GM12878 (cell line): ENCODE measurements at regions of chr17 and their contacts with region 1.

Region 1: GRCh38 chr17:75749545-75750389 is 15.2 kb downstream of the GALK1 start:
- DNase-seq: no peak
- ATAC-seq: peak; percentile 82
- H3K4me3 ChIP-seq: no peak overlapping the region
- H3K27ac ChIP-seq: no peak overlapping the region
- H3K4me1 ChIP-seq: peaks cover 10% of the 10 kb centered on the region
- H3K27me3 ChIP-seq: no peaks in the 10 kb centered on the region
- CTCF ChIP-seq: peak; percentile 85 to 94 (median 88)
- EP300 ChIP-seq: no peak
- POLR2A ChIP-seq: no peak
- RAD21 ChIP-seq: peak; percentile 77

Region 2: DNA sequence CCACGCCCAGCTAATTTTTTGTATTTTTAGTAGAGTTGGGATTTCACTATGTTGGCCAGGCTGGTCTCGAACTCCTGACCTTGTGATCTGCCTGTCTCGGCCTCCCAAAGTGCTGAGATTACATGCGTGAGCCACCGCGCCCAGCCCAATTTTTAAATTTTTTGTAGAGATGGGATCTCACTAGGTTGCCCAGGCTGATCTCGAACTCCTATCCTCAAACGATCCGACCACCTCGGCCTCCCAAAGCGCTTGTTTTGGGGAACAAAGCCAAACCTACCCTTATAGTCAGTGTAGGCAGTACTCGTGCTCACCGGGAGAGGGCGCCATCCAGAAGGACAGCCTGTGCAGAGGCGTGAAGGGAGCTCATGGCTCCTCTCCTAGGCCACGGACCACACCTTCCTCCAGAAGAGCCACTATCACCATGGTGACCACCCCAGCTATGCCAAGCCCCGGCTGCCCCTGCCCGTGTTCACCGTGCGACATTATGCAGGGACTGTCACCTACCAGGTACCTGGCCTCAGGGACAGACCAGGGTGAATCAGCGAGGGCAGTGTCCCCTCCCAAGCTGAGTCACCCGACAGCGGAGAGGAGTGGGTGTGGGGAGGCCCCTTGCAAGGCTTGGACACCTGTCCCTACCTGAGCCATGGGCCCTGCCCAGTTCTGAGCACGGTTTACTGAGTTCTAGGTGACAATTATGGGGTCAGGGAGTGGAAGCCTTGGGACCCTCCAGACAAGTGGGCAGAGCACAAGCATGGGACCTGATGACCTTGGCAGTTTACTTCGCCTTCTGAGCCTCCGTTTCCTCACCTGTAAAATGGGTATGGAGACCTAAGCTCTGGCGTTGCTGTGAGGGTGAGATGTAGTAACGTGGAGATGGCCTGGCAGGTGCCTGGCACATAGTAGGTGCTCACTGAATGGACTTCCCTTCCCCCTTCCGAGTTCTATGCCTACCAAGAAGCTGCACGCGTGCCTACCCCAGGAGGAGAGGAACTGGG is 148.4 kb before region 1 on chr17:
- CTCF ChIA-PET with region 1: interaction called, 164 read pairs
- POLR2A ChIA-PET with region 1: no interaction called
- RAD21 ChIA-PET with region 1: interaction called, 51 read pairs
- SMC1A ChIA-PET with region 1: interaction called, 18 read pairs
- in situ Hi-C with region 1: no loop called
- intact Hi-C with region 1: loop called (anchors 2 kb)
- DNase-seq: no peak
- ATAC-seq: peak; percentile 94
- H3K4me3 ChIP-seq: no peak overlapping the region
- H3K27ac ChIP-seq: no peak overlapping the region
- H3K4me1 ChIP-seq: no peaks in the 10 kb centered on the region
- H3K27me3 ChIP-seq: no peaks in the 10 kb centered on the region
- CTCF ChIP-seq: peak; percentile 74 to 91 (median 79)
- EP300 ChIP-seq: no peak
- POLR2A ChIP-seq: no peak
- RAD21 ChIP-seq: peak; percentile 45

Region 3: GRCh38 chr17:75645889-75646637 is 103.7 kb before region 1 on chr17:
- CTCF ChIA-PET with region 1: interaction called, 89 read pairs
- POLR2A ChIA-PET with region 1: interaction called, 5 read pairs
- RAD21 ChIA-PET with region 1: interaction called, 6 read pairs
- SMC1A ChIA-PET with region 1: interaction called, 20 read pairs
- in situ Hi-C with region 1: no loop called
- intact Hi-C with region 1: no loop called
- DNase-seq: peak; percentile 42
- ATAC-seq: peak; percentile 100
- H3K4me3 ChIP-seq: no peak overlapping the region
- H3K27ac ChIP-seq: peak overlapping the region; percentile 69
- H3K4me1 ChIP-seq: peaks cover 14% of the 10 kb centered on the region
- H3K27me3 ChIP-seq: no peaks in the 10 kb centered on the region
- CTCF ChIP-seq: no peak
- EP300 ChIP-seq: peak in 1 of 2 experiments; percentile 25; a peak in 1 of 4 replicates
- POLR2A ChIP-seq: no peak
- RAD21 ChIP-seq: no peak

Region 4: DNA sequence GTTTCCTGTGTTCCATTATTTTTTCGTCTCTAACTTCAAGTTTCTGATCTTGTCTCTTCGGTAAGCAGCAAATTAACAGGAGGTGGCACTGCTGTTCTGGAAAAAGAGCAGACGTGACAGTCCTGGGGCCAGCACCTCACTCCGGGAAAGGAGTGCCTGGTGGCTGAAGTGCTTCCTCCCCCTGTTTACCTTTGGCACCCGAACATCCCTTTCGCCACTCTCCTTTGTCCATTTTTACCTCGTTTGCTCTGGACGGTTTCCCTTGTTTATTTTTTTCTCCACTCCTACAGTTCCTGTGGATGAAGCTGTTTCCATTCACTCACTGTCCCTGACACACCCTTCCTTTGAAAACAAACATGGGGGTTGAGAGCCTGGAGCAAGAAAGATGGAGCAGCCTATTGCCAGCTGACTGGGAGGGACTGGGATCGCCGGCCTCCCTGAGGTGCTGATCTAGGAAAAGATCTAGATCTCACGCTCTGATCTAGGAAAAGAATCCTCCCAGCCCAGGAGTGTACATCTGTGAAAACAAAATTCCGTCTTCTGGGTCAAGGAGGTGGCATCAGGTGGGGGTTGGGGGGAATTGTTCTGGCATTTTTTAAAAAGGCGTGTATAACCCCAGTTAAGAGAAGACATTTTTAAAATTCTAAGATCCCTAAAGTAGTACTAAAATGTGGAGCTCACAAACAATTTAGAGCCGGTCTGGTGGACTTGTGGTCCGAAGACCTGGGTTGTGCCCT is 69.9 kb before region 1 on chr17:
- CTCF ChIA-PET with region 1: interaction called, 197 read pairs
- POLR2A ChIA-PET with region 1: interaction called, 3 read pairs
- RAD21 ChIA-PET with region 1: interaction called, 79 read pairs
- SMC1A ChIA-PET with region 1: interaction called, 72 read pairs
- in situ Hi-C with region 1: no loop called
- intact Hi-C with region 1: loop called (anchors 1 kb)
- DNase-seq: no peak
- ATAC-seq: no peak
- H3K4me3 ChIP-seq: no peak overlapping the region
- H3K27ac ChIP-seq: no peak overlapping the region
- H3K4me1 ChIP-seq: peaks cover 3% of the 10 kb centered on the region; the same call in 1 of the 2 replicates
- H3K27me3 ChIP-seq: no peaks in the 10 kb centered on the region
- CTCF ChIP-seq: no peak
- EP300 ChIP-seq: no peak
- POLR2A ChIP-seq: no peak
- RAD21 ChIP-seq: no peak

Region 5: GRCh38 chr17:75738218-75738802 is 11.5 kb before region 1 on chr17:
- CTCF ChIA-PET with region 1: interaction called, 48 read pairs
- POLR2A ChIA-PET with region 1: interaction called, 3 read pairs
- RAD21 ChIA-PET with region 1: interaction called, 9 read pairs
- SMC1A ChIA-PET with region 1: interaction called, 18 read pairs
- in situ Hi-C with region 1: no loop called
- intact Hi-C with region 1: no loop called
- DNase-seq: no peak
- ATAC-seq: peak; percentile 80
- H3K4me3 ChIP-seq: no peak overlapping the region
- H3K27ac ChIP-seq: no peak overlapping the region
- H3K4me1 ChIP-seq: peaks cover 7% of the 10 kb centered on the region
- H3K27me3 ChIP-seq: no peaks in the 10 kb centered on the region
- CTCF ChIP-seq: no peak
- EP300 ChIP-seq: no peak
- POLR2A ChIP-seq: no peak
- RAD21 ChIP-seq: no peak

Region 6: GRCh38 chr17:75808905-75809715 is 59.3 kb after region 1 on chr17:
- CTCF ChIA-PET with region 1: interaction called, 5 read pairs
- POLR2A ChIA-PET with region 1: no interaction called
- RAD21 ChIA-PET with region 1: interaction called, 11 read pairs
- SMC1A ChIA-PET with region 1: interaction called, 6 read pairs
- in situ Hi-C with region 1: no loop called
- intact Hi-C with region 1: no loop called
- DNase-seq: peak; percentile 57
- ATAC-seq: peak; percentile 90
- H3K4me3 ChIP-seq: no peak overlapping the region
- H3K27ac ChIP-seq: 0 out of 2 replicates have a peak overlapping the region, but pooled peaks have one; percentile 6
- H3K4me1 ChIP-seq: peaks cover 9% of the 10 kb centered on the region
- H3K27me3 ChIP-seq: no peaks in the 10 kb centered on the region
- CTCF ChIP-seq: no peak
- EP300 ChIP-seq: no peak
- POLR2A ChIP-seq: no peak
- RAD21 ChIP-seq: no peak

Region 7: GRCh38 chr17:75864448-75864871 is 114.7 kb after region 1 on chr17:
- CTCF ChIA-PET with region 1: interaction called, 14 read pairs
- POLR2A ChIA-PET with region 1: no interaction called
- RAD21 ChIA-PET with region 1: interaction called, 4 read pairs
- SMC1A ChIA-PET with region 1: interaction called, 3 read pairs
- in situ Hi-C with region 1: no loop called
- intact Hi-C with region 1: no loop called
- DNase-seq: peak; percentile 77
- ATAC-seq: peak; percentile 90
- H3K4me3 ChIP-seq: peak overlapping the region; percentile 22; the same call in 1 of the 2 replicates
- H3K27ac ChIP-seq: peak overlapping the region; percentile 29
- H3K4me1 ChIP-seq: peaks cover 22% of the 10 kb centered on the region
- H3K27me3 ChIP-seq: no peaks in the 10 kb centered on the region
- CTCF ChIP-seq: no peak
- EP300 ChIP-seq: peak in 1 of 2 experiments; percentile 38; a peak in 1 of 4 replicates
- POLR2A ChIP-seq: no peak
- RAD21 ChIP-seq: no peak

Region 8: GRCh38 chr17:75970011-75970523 is 220.3 kb after region 1 on chr17:
- CTCF ChIA-PET with region 1: no interaction called
- POLR2A ChIA-PET with region 1: no interaction called
- RAD21 ChIA-PET with region 1: no interaction called
- SMC1A ChIA-PET with region 1: no interaction called
- in situ Hi-C with region 1: no loop called
- intact Hi-C with region 1: no loop called
- DNase-seq: no peak
- ATAC-seq: no peak
- H3K4me3 ChIP-seq: no peak overlapping the region
- H3K27ac ChIP-seq: no peak overlapping the region
- H3K4me1 ChIP-seq: no peaks in the 10 kb centered on the region
- H3K27me3 ChIP-seq: no peaks in the 10 kb centered on the region
- CTCF ChIP-seq: no peak
- EP300 ChIP-seq: no peak
- POLR2A ChIP-seq: no peak
- RAD21 ChIP-seq: no peak

Region 9: GRCh38 chr17:76103274-76104139 is 353.7 kb after region 1 on chr17 and contains the start of gene EXOC7:
- CTCF ChIA-PET with region 1: no interaction called
- POLR2A ChIA-PET with region 1: no interaction called
- RAD21 ChIA-PET with region 1: no interaction called
- SMC1A ChIA-PET with region 1: no interaction called
- in situ Hi-C with region 1: no loop called
- intact Hi-C with region 1: no loop called
- DNase-seq: peak; percentile 75
- ATAC-seq: peak; percentile 96
- H3K4me3 ChIP-seq: peak within 1 kb of the TSS; percentile 90
- H3K27ac ChIP-seq: peak within 1 kb of the TSS; percentile 71
- H3K4me1 ChIP-seq: peaks cover 6% of the 10 kb centered on the region
- H3K27me3 ChIP-seq: no peaks in the 10 kb centered on the region
- CTCF ChIP-seq: no peak
- EP300 ChIP-seq: no peak
- POLR2A ChIP-seq: peak; percentile 95
- RAD21 ChIP-seq: no peak
- polyA plus RNA-seq, gene EXOC7: 18.8 to 25.5 TPM